Prostate gland (tissue), 2 donors: ENCODE measurements at regions of chr5 and their contacts with region 1.

Region 1: GRCh38 chr5:67246108-67246507 is 49.5 kb upstream of the CD180 start:
- DNase-seq: peak; percentile 73
- H3K4me3 ChIP-seq: no peak overlapping the region
- H3K27ac ChIP-seq: peak overlapping the region; percentile 32 to 47
- H3K4me1 ChIP-seq: peaks cover 3% of the 10 kb centered on the region
- H3K27me3 ChIP-seq: no peaks in the 10 kb centered on the region
- CTCF ChIP-seq: peak; percentile 71 to 96 (median 88)
- POLR2A ChIP-seq: no peak

Region 2: GRCh38 chr5:67453111-67453905 is 207.2 kb after region 1 on chr5:
- intact Hi-C with region 1: loop called (anchors 5 kb)
- DNase-seq: no peak
- H3K4me3 ChIP-seq: no peak overlapping the region
- H3K27ac ChIP-seq: no peak overlapping the region
- H3K4me1 ChIP-seq: no peaks in the 10 kb centered on the region
- H3K27me3 ChIP-seq: no peaks in the 10 kb centered on the region
- CTCF ChIP-seq: no peak
- POLR2A ChIP-seq: no peak

Region 3: GRCh38 chr5:67699560-67699959 is 453.5 kb after region 1 on chr5:
- intact Hi-C with region 1: loop called (anchors 5 kb)
- DNase-seq: no peak
- H3K4me3 ChIP-seq: no peak overlapping the region
- H3K27ac ChIP-seq: no peak overlapping the region
- H3K4me1 ChIP-seq: peaks cover 8% of the 10 kb centered on the region
- H3K27me3 ChIP-seq: no peaks in the 10 kb centered on the region
- CTCF ChIP-seq: no peak
- POLR2A ChIP-seq: no peak

Region 4: GRCh38 chr5:68252673-68253623 is 1006.8 kb after region 1 on chr5:
- intact Hi-C with region 1: loop called (anchors 2 kb)
- DNase-seq: peak; percentile 42
- H3K4me3 ChIP-seq: no peak overlapping the region
- H3K27ac ChIP-seq: peak overlapping the region; percentile 20 to 47
- H3K4me1 ChIP-seq: peaks cover 9% of the 10 kb centered on the region
- H3K27me3 ChIP-seq: no peaks in the 10 kb centered on the region
- CTCF ChIP-seq: peak; percentile 23 to 72 (median 58)
- POLR2A ChIP-seq: no peak

Region 5: GRCh38 chr5:68962757-68963484 is 1716.8 kb after region 1 on chr5:
- intact Hi-C with region 1: loop called (anchors 10 kb)
- DNase-seq: peak; percentile 68
- H3K4me3 ChIP-seq: no peak overlapping the region
- H3K27ac ChIP-seq: peak overlapping the region; percentile 12 to 57
- H3K4me1 ChIP-seq: no peaks in the 10 kb centered on the region
- H3K27me3 ChIP-seq: no peaks in the 10 kb centered on the region
- CTCF ChIP-seq: peak; percentile 77 to 90 (median 86)
- POLR2A ChIP-seq: no peak